ENCODE measurements at regions of chr3 and their contacts with region 1.

Region 1: GRCh38 chr3:132535575-132536441 is 61.3 kb upstream of the ACKR4 start:
- DNase-seq: peak; percentile 50
- H3K4me3 ChIP-seq: no peak overlapping the region
- H3K27ac ChIP-seq: no peak overlapping the region
- H3K4me1 ChIP-seq: no peaks in the 10 kb centered on the region
- H3K27me3 ChIP-seq: no peaks in the 10 kb centered on the region
- CTCF ChIP-seq: peak; percentile 47 to 61

Region 2: GRCh38 chr3:132311841-132312240 is 224.0 kb before region 1 on chr3:
- CTCF ChIA-PET with region 1: no interaction called
- dilution Hi-C with region 1: no loop called
- in situ Hi-C with region 1: no loop called
- intact Hi-C with region 1: no loop called
- DNase-seq: no peak
- H3K4me3 ChIP-seq: no peak overlapping the region
- H3K27ac ChIP-seq: no peak overlapping the region
- H3K4me1 ChIP-seq: no peaks in the 10 kb centered on the region
- H3K27me3 ChIP-seq: no peaks in the 10 kb centered on the region
- CTCF ChIP-seq: no peak

Region 3: DNA sequence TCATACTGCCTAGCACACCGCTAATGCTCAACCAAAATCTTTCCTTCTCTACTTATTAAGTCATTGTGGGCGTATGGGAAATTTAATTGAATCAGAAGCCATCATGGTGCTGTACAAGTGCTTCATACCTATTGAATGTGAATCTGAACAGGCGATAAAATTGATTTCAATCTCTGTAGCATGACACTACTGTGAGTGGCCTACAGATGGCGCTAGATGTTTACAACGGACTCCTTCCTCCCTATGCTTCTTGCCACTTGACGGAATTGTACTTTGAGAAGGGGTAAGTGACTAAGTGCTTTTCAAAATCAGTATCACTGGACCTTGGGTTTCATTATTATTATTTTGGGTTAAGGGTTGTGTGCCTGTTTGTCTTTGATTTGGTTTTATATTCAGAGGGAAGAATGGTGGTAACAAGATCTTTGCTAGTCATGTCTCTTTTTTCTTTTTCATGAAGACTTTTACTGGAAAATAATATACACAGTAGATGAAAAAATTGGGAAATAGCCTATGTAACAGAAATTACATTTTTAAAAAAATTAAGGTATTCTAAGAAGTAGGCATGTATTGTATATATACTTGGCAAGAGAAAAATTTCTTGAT is 183.2 kb before region 1 on chr3:
- CTCF ChIA-PET with region 1: no interaction called
- dilution Hi-C with region 1: no loop called
- in situ Hi-C with region 1: no loop called
- intact Hi-C with region 1: loop called (anchors 5 kb)
- DNase-seq: peak; percentile 53
- H3K4me3 ChIP-seq: no peak overlapping the region
- H3K27ac ChIP-seq: no peak overlapping the region
- H3K4me1 ChIP-seq: peaks cover 3% of the 10 kb centered on the region
- H3K27me3 ChIP-seq: no peaks in the 10 kb centered on the region
- CTCF ChIP-seq: peak; percentile 91 to 92

Region 4: DNA sequence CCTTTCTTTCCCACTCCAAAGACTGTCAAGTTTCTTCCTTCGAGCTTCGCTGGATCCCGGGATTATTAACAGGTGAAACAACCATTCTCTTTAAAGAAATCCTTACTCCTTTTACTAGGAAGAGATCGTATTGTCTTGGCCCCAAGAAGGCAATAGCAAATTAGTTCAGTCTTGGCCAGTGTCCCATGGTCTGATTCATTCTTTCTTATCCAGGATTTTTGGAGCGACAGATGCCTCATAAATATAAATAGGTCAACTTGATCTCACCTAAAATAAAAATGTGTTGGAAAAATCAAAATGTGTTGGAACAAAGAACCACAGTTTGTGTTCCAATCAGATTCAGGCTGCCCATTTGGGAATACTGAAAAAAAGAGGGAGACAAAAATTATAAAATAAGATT is 362.3 kb after region 1 on chr3:
- CTCF ChIA-PET with region 1: no interaction called
- dilution Hi-C with region 1: no loop called
- in situ Hi-C with region 1: no loop called
- intact Hi-C with region 1: no loop called
- DNase-seq: no peak
- H3K4me3 ChIP-seq: no peak overlapping the region
- H3K27ac ChIP-seq: no peak overlapping the region
- H3K4me1 ChIP-seq: no peaks in the 10 kb centered on the region
- H3K27me3 ChIP-seq: no peaks in the 10 kb centered on the region
- CTCF ChIP-seq: no peak